ENCODE measurements at regions of chr6 and their contacts with region 1.

Region 1: GRCh38 chr6:122399384-122400158 is at the start of gene HSF2:
- DNase-seq: peak; percentile 97 to 98 (median 97)
- ATAC-seq: peak; percentile 99 to 100 (median 100)
- H3K4me3 ChIP-seq: peak within 1 kb of the TSS; percentile 78 to 98 (median 94)
- H3K27ac ChIP-seq: peak within 1 kb of the TSS; percentile 50 to 93 (median 86)
- H3K4me1 ChIP-seq: peaks cover 0 to 41% (median 19%) of the 10 kb centered on the region in 12 donors
- H3K27me3 ChIP-seq: no peaks in the 10 kb centered on the region
- CTCF ChIP-seq: peak in 5 of 12 donors; percentile 34 to 56 (median 41)
- POLR2A ChIP-seq: no peak
- total RNA-seq, gene HSF2: 18.3 to 34.2 (median 23.1) TPM

Region 2: GRCh38 chr6:121334299-121335086 is 1065.1 kb before region 1 on chr6 and contains the start of gene TBC1D32:
- intact Hi-C with region 1: loop called in 1 of 10 experiments (anchors 10 kb)
- DNase-seq: peak; percentile 91 to 96 (median 94)
- ATAC-seq: peak; percentile 99 to 100 (median 100)
- H3K4me3 ChIP-seq: peak within 1 kb of the TSS; percentile 12 to 87 (median 68)
- H3K27ac ChIP-seq: peak within 1 kb of the TSS; percentile 70 to 98 (median 92)
- H3K4me1 ChIP-seq: peaks cover 0 to 12% (median 2%) of the 10 kb centered on the region in 12 donors
- H3K27me3 ChIP-seq: no peaks in the 10 kb centered on the region
- CTCF ChIP-seq: peak in 1 of 12 donors; percentile 12
- POLR2A ChIP-seq: peak in 1 of 2 donors; percentile 52
- total RNA-seq, gene TBC1D32: 1.0 to 4.6 (median 3.4) TPM

Region 3: GRCh38 chr6:122459213-122459612 is 59.6 kb after region 1 on chr6:
- intact Hi-C with region 1: loop called in 1 of 10 experiments (anchors 10 kb)
- DNase-seq: no peak
- ATAC-seq: no peak
- H3K4me3 ChIP-seq: no peak overlapping the region
- H3K27ac ChIP-seq: no peak overlapping the region
- H3K4me1 ChIP-seq: peaks cover 0 to 80% (median 65%) of the 10 kb centered on the region in 12 donors
- H3K27me3 ChIP-seq: no peaks in the 10 kb centered on the region
- CTCF ChIP-seq: no peak
- POLR2A ChIP-seq: no peak

Region 4: GRCh38 chr6:122471107-122472021 is 71.8 kb after region 1 on chr6 and contains the start of gene SERINC1:
- intact Hi-C with region 1: loop called in 9 of 10 experiments (anchors 2 to 10 kb)
- DNase-seq: peak; percentile 95 to 97 (median 96)
- ATAC-seq: peak; percentile 99 to 100 (median 99)
- H3K4me3 ChIP-seq: peak within 1 kb of the TSS; percentile 66 to 97 (median 89)
- H3K27ac ChIP-seq: peak within 1 kb of the TSS; percentile 77 to 98 (median 95)
- H3K4me1 ChIP-seq: peaks cover 0 to 50% (median 22%) of the 10 kb centered on the region in 12 donors
- H3K27me3 ChIP-seq: no peaks in the 10 kb centered on the region
- CTCF ChIP-seq: no peak
- POLR2A ChIP-seq: peak; percentile 65 to 74
- total RNA-seq, gene SERINC1: 158 to 208 (median 174) TPM

Region 5: GRCh38 chr6:122568797-122569661 is 169.5 kb after region 1 on chr6:
- intact Hi-C with region 1: no loop called
- DNase-seq: no peak
- ATAC-seq: peak in 1 of 4 donors; percentile 20
- H3K4me3 ChIP-seq: no peak overlapping the region
- H3K27ac ChIP-seq: no peak overlapping the region
- H3K4me1 ChIP-seq: no peaks in the 10 kb centered on the region
- H3K27me3 ChIP-seq: peaks cover 0 to 6% (median 0%) of the 10 kb centered on the region in 9 donors
- CTCF ChIP-seq: no peak
- POLR2A ChIP-seq: no peak